ENCODE measurements at regions of chr17 and their contacts with region 1.

Region 1: DNA sequence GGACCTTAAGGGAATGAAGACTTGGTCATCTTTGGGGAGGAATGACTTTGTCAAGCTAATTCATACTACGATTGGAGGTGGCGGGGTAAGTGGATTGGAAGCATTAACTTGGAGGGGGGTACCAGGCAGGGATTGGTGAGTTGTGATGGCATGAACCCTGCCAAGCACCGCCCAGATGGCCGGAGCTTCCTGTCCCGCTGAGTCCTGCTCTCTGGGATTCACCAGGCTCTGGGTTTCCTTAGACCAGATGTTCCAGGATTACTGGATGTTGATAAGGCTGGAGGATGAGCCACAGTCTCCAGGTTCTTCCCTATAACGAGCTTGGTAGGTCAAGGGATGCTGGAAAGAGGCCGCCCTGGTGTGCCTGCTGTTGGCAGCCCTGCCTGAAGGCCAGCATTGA is 154.9 kb downstream of the SDK2 start:
- DNase-seq: no peak
- H3K4me3 ChIP-seq: no peak overlapping the region
- H3K27ac ChIP-seq: no peak overlapping the region
- H3K4me1 ChIP-seq: no peaks in the 10 kb centered on the region
- H3K27me3 ChIP-seq: no peaks in the 10 kb centered on the region
- CTCF ChIP-seq: no peak
- EP300 ChIP-seq: no peak
- POLR2A ChIP-seq: no peak

Region 2: DNA sequence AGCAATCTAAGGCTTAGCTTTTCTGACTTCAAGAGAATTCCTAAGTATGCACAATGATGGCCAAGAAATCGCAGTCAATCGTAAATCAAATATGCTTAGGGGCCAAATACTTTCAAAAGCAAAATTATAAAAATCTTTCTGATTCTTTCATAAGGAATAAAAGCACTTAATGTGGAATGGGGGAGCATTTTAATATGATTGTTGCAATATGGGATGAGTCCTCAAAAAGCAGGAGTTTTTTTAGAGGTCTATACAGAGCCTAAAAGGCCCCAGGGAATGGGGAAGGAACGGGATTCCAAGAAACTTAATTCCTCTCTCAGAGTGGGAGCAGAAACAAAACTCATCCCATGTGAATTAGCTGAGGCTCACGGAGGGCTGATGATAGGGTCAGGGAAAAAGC is 382.1 kb before region 1 on chr17:
- in situ Hi-C with region 1: no loop called
- intact Hi-C with region 1: loop called (anchors 5 kb)
- DNase-seq: no peak
- H3K4me3 ChIP-seq: no peak overlapping the region
- H3K27ac ChIP-seq: no peak overlapping the region
- H3K4me1 ChIP-seq: no peaks in the 10 kb centered on the region
- H3K27me3 ChIP-seq: no peaks in the 10 kb centered on the region
- CTCF ChIP-seq: no peak
- EP300 ChIP-seq: no peak
- POLR2A ChIP-seq: no peak

Region 3: DNA sequence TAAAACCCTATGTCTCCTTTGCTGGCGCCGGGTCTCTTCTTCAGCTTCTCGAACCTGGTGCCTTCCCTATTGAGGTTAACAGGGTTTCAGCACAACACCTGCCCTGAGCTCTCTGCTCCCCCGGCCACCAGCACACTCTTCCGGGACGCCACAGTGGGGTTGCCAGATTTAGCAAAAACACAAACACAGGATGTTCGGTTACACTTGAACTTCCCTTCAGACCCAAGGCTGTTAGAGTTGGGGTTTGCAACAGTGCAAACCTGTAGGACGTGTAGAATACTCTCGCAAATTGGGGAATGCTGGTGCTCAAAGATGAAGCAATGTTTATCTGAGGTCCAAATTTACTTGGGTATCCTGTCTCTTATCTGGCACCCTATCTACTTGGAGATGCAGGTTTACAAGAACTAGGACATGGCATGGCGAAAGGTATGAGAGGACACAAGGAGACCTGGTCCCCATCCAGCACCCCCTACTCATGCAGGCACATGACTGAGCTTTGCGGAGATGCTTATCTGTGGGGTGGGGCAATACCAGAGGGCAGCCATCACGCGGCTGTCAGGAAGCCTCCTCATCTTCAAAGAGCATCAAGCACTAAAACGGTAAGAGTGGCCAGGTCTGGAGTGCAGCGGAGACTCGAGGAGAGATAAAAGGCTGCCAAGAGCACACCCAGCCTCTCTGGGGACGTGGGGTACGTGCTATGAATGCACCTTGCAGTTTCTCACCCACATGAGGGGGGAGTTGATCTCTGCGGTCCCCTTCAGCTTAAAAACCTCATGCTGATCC is 102.2 kb after region 1 on chr17:
- in situ Hi-C with region 1: no loop called
- intact Hi-C with region 1: no loop called
- DNase-seq: peak; percentile 21
- H3K4me3 ChIP-seq: no peak overlapping the region
- H3K27ac ChIP-seq: peak overlapping the region in 1 of 4 donors; percentile 11
- H3K4me1 ChIP-seq: no peaks in the 10 kb centered on the region
- H3K27me3 ChIP-seq: no peaks in the 10 kb centered on the region
- CTCF ChIP-seq: no peak
- EP300 ChIP-seq: no peak
- POLR2A ChIP-seq: no peak